Aorta (tissue), 5 donors: ENCODE measurements at regions of chr6 and their contacts with region 1.

Region 1: GRCh38 chr6:88780714-88781389 is 182.6 kb downstream of the RNGTT start:
- DNase-seq: no peak
- ATAC-seq: peak; percentile 82
- H3K4me3 ChIP-seq: no peak overlapping the region
- H3K27ac ChIP-seq: no peak overlapping the region
- H3K4me1 ChIP-seq: no peaks in the 10 kb centered on the region
- H3K27me3 ChIP-seq: no peaks in the 10 kb centered on the region

Region 2: DNA sequence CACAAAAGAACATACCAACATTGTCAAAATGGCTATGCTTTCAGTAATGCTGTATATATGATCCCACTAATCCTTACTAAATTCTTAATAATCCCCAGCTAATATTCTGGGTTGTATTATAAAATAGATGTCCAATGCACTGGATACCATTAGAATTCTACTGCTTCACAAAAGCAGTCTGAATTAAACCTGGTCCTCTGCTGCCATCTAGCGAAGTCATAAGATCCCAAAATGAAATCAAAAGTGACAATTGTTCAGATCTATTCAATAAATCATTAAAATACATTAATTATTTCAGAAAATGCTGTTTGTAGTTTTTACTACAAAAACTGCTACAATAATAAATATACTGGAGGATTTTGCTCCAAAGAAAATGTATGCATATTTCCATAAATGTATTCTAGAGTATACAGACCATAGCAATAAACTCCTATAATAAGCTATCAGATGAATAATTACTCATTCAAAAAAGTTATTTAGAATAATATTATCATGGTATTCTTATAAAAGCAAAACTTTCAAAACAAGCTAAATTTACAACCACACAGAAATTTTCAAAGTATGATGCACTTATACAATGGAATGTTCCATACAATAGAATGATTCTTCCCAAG is 90.0 kb after region 1 on chr6:
- intact Hi-C with region 1: loop called in 1 of 2 experiments (anchors 10 kb)
- DNase-seq: no peak
- ATAC-seq: peak; percentile 83
- H3K4me3 ChIP-seq: no peak overlapping the region
- H3K27ac ChIP-seq: no peak overlapping the region
- H3K4me1 ChIP-seq: peaks cover 0 to 9% of the 10 kb centered on the region in 2 donors
- H3K27me3 ChIP-seq: no peaks in the 10 kb centered on the region